GM12878 (cell line): ENCODE measurements at regions of chr12 and their contacts with region 1.

Region 1: DNA sequence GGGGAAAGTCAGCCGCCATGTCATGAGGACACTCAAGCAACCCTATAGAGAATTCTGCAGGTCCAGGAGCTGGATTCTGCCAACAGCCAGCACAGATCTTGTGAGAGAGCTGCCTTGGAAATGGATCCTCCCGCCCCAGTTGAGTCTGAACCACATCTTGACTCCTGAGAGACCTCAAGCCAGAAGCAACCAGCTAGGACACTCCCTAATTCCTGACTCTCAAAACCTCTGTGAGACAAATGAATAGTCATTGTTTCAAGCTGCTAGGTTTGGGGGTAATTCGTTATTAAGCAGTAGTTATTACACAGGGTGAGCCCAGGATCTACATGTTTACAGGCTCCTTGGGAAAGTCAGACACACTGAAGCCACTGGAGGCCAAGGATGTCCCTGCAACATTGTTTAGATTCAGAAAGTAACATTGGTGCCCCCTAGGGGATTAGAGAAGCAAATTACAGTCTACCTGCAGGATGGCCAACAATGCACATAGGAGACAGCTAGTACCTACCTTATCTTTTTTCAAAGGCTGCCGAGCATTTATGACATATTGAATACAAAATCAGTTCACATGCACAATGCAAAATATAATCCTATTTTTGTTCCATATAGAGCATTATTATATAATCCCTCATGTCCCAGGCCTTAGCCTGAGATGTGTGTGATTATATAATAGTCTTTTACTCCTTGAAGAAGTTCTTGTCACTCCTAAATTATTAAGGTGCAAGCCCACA is 57.9 kb upstream of the FICD start:
- DNase-seq: peak; percentile 34
- ATAC-seq: peak; percentile 89
- H3K4me3 ChIP-seq: no peak overlapping the region
- H3K27ac ChIP-seq: no peak overlapping the region
- H3K4me1 ChIP-seq: peaks cover 7% of the 10 kb centered on the region; the same call in 1 of the 2 replicates
- H3K27me3 ChIP-seq: no peaks in the 10 kb centered on the region
- CTCF ChIP-seq: peak; percentile 73 to 82 (median 74)
- EP300 ChIP-seq: no peak
- POLR2A ChIP-seq: no peak
- RAD21 ChIP-seq: peak; percentile 91

Region 2: GRCh38 chr12:107992870-107993451 is 464.2 kb before region 1 on chr12:
- CTCF ChIA-PET with region 1: interaction called, 51 read pairs
- POLR2A ChIA-PET with region 1: no interaction called
- RAD21 ChIA-PET with region 1: interaction called, 8 read pairs
- SMC1A ChIA-PET with region 1: interaction called, 32 read pairs
- in situ Hi-C with region 1: no loop called
- intact Hi-C with region 1: loop called (anchors 2 kb)
- DNase-seq: peak; percentile 2
- ATAC-seq: peak; percentile 98
- H3K4me3 ChIP-seq: no peak overlapping the region
- H3K27ac ChIP-seq: no peak overlapping the region
- H3K4me1 ChIP-seq: no peaks in the 10 kb centered on the region
- H3K27me3 ChIP-seq: no peaks in the 10 kb centered on the region
- CTCF ChIP-seq: peak; percentile 52 to 65 (median 63)
- EP300 ChIP-seq: no peak
- POLR2A ChIP-seq: no peak
- RAD21 ChIP-seq: 0 out of 2 replicates have a peak, but pooled peaks have one; percentile 28

Region 3: DNA sequence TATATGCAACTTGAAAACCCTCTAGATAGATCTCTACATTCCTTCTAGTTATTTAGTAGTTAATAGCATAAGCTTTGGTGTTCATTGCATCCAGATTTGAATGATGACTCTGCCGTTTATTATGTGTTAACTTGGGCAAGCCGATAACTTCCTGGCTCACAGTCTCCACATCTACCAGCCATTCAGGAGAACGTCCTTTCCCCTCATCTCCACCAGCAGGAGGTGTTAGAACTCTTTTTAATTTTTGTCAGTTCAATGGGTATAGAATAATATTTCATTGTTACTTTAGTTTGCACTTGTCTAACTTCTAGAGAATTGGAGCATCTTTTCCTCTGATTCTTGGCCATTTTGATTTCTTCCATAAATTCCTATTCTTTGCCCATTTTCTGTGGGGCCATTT is 358.1 kb before region 1 on chr12:
- CTCF ChIA-PET with region 1: interaction called, 4 read pairs
- POLR2A ChIA-PET with region 1: no interaction called
- RAD21 ChIA-PET with region 1: interaction called, 4 read pairs
- SMC1A ChIA-PET with region 1: interaction called, 3 read pairs
- in situ Hi-C with region 1: no loop called
- intact Hi-C with region 1: loop called (anchors 10 kb)
- DNase-seq: no peak
- ATAC-seq: peak; percentile 50; the same call in 2 of the 3 replicates
- H3K4me3 ChIP-seq: no peak overlapping the region
- H3K27ac ChIP-seq: no peak overlapping the region
- H3K4me1 ChIP-seq: no peaks in the 10 kb centered on the region; the same call in 1 of the 2 replicates
- H3K27me3 ChIP-seq: no peaks in the 10 kb centered on the region
- CTCF ChIP-seq: peak; percentile 32 to 37 (median 35); a peak in 4 of 6 replicates
- EP300 ChIP-seq: no peak
- POLR2A ChIP-seq: no peak
- RAD21 ChIP-seq: peak; percentile 59

Region 4: GRCh38 chr12:108234158-108234557 is 223.0 kb before region 1 on chr12:
- CTCF ChIA-PET with region 1: interaction called, 29 read pairs
- POLR2A ChIA-PET with region 1: no interaction called
- RAD21 ChIA-PET with region 1: interaction called, 23 read pairs
- SMC1A ChIA-PET with region 1: interaction called, 8 read pairs
- in situ Hi-C with region 1: no loop called
- intact Hi-C with region 1: loop called (anchors 2 kb)
- DNase-seq: no peak
- ATAC-seq: peak; percentile 78
- H3K4me3 ChIP-seq: no peak overlapping the region
- H3K27ac ChIP-seq: no peak overlapping the region
- H3K4me1 ChIP-seq: no peaks in the 10 kb centered on the region
- H3K27me3 ChIP-seq: peaks cover 0 to 3% of the 10 kb centered on the region in 2 experiments; a peak in 3 of 4 replicates
- CTCF ChIP-seq: peak; percentile 36 to 58 (median 53); a peak in 4 of 6 replicates
- EP300 ChIP-seq: no peak
- POLR2A ChIP-seq: no peak
- RAD21 ChIP-seq: peak; percentile 85

Region 5: GRCh38 chr12:108337235-108338223 is 119.6 kb before region 1 on chr12:
- CTCF ChIA-PET with region 1: interaction called, 9 read pairs
- POLR2A ChIA-PET with region 1: no interaction called
- RAD21 ChIA-PET with region 1: interaction called, 9 read pairs
- SMC1A ChIA-PET with region 1: interaction called, 22 read pairs
- in situ Hi-C with region 1: no loop called
- intact Hi-C with region 1: loop called (anchors 1 kb)
- DNase-seq: no peak
- ATAC-seq: peak; percentile 68
- H3K4me3 ChIP-seq: no peak overlapping the region
- H3K27ac ChIP-seq: peak overlapping the region; percentile 84
- H3K4me1 ChIP-seq: peaks cover 63% of the 10 kb centered on the region
- H3K27me3 ChIP-seq: no peaks in the 10 kb centered on the region
- CTCF ChIP-seq: peak; percentile 52 to 66 (median 63)
- EP300 ChIP-seq: peak; percentile 19 to 29; a peak in 1 of 4 replicates
- POLR2A ChIP-seq: no peak
- RAD21 ChIP-seq: peak; percentile 70

Region 6: GRCh38 chr12:108505129-108505528 is 48.0 kb after region 1 on chr12:
- CTCF ChIA-PET with region 1: no interaction called
- POLR2A ChIA-PET with region 1: interaction called, 10 read pairs
- RAD21 ChIA-PET with region 1: no interaction called
- SMC1A ChIA-PET with region 1: no interaction called
- in situ Hi-C with region 1: no loop called
- intact Hi-C with region 1: loop called (anchors 2 kb)
- DNase-seq: no peak
- ATAC-seq: no peak
- H3K4me3 ChIP-seq: no peak overlapping the region
- H3K27ac ChIP-seq: no peak overlapping the region
- H3K4me1 ChIP-seq: 0 out of 2 replicates have a peak, but pooled peaks cover 5% of the 10 kb centered on the region
- H3K27me3 ChIP-seq: no peaks in the 10 kb centered on the region
- CTCF ChIP-seq: no peak
- EP300 ChIP-seq: no peak
- POLR2A ChIP-seq: no peak
- RAD21 ChIP-seq: no peak

Region 7: DNA sequence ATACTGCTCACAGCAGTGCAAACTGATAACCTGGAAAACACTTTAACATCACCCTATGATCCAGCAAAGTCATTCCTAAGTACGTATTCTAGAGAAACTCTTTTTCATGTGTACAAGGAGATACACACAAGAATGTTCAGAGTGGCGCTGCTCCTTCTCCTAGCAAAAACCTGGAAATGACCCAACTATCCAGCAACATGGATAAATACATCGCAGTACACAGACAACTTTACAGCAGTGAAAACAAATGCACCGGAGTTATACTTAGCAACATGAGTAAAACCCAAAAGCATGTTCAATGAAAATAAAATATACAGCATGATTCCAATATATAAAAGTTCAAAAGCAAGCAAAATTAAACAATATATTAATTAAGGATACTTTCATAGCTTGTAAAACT is 85.2 kb after region 1 on chr12:
- CTCF ChIA-PET with region 1: no interaction called
- POLR2A ChIA-PET with region 1: no interaction called
- RAD21 ChIA-PET with region 1: no interaction called
- SMC1A ChIA-PET with region 1: no interaction called
- in situ Hi-C with region 1: no loop called
- intact Hi-C with region 1: no loop called
- DNase-seq: no peak
- ATAC-seq: no peak
- H3K4me3 ChIP-seq: no peak overlapping the region
- H3K27ac ChIP-seq: peak overlapping the region; percentile 88; the same call in 1 of the 2 replicates
- H3K4me1 ChIP-seq: peaks cover 23% of the 10 kb centered on the region
- H3K27me3 ChIP-seq: no peaks in the 10 kb centered on the region
- CTCF ChIP-seq: no peak
- EP300 ChIP-seq: no peak
- POLR2A ChIP-seq: no peak
- RAD21 ChIP-seq: no peak